ENCODE measurements at regions of chr12 and their contacts with region 1.

Region 1: GRCh38 chr12:50074936-50075807 is 10.0 kb upstream of the SMARCD1 start:
- DNase-seq: peak; percentile 85
- H3K4me3 Mint-ChIP-seq: no peak overlapping the region
- H3K27ac Mint-ChIP-seq: peak overlapping the region; percentile 30
- H3K4me1 Mint-ChIP-seq: peaks cover 12% of the 10 kb centered on the region
- H3K27me3 Mint-ChIP-seq: no peaks in the 10 kb centered on the region
- CTCF ChIP-seq: peak; percentile 90

Region 2: DNA sequence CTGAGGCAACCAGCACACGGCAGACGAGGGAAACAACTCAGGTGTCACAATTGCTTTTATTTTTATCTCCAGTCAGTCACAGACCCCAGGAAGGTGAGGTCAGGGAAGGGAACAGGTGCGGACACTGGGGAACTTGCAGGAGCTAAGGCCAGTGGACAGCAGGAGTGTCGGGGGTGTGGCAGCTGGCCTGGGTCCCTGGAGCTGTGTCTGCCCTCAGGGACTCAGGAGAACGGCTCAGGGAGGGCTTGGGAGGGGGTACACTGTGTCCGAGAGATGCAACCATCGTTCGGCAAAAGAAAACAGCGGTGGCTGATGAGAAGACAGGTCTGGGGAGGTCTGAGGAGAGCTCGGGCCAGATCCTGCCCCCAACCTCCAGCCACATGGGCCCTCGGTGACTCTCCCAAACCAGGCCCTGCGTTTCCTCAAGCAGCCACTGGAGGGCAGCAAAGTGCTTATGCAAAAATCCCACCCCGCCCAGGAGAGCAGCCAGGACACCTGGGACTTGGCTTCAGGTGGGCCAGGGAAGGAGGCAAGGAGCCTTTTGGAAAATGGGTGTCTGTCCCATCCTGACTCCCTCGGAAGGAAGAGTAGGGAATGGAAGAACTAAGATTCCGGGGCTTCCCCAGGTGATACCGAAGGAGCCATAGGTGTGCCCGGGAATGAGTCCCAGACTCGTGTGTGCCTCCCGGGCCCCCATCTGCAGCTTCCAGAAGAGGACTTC is 208.2 kb before region 1 on chr12:
- CTCF ChIA-PET with region 1: interaction called, 46 read pairs
- POLR2A ChIA-PET with region 1: no interaction called
- intact Hi-C with region 1: loop called (anchors 1 kb)
- DNase-seq: peak; percentile 77
- H3K4me3 Mint-ChIP-seq: no peak overlapping the region
- H3K27ac Mint-ChIP-seq: no peak overlapping the region
- H3K4me1 Mint-ChIP-seq: peaks cover 10% of the 10 kb centered on the region
- H3K27me3 Mint-ChIP-seq: peaks cover 14% of the 10 kb centered on the region
- CTCF ChIP-seq: peak; percentile 95

Region 3: GRCh38 chr12:49983892-49984291 is 91.3 kb before region 1 on chr12:
- CTCF ChIA-PET with region 1: interaction called, 10 read pairs
- POLR2A ChIA-PET with region 1: no interaction called
- intact Hi-C with region 1: no loop called
- DNase-seq: peak; percentile 45
- H3K4me3 Mint-ChIP-seq: no peak overlapping the region
- H3K27ac Mint-ChIP-seq: no peak overlapping the region
- H3K4me1 Mint-ChIP-seq: peaks cover 5% of the 10 kb centered on the region
- H3K27me3 Mint-ChIP-seq: no peaks in the 10 kb centered on the region
- CTCF ChIP-seq: no peak

Region 4: GRCh38 chr12:50055831-50056638 is 19.1 kb before region 1 on chr12:
- CTCF ChIA-PET with region 1: interaction called, 23 read pairs
- POLR2A ChIA-PET with region 1: interaction called, 4 read pairs
- intact Hi-C with region 1: no loop called
- DNase-seq: peak; percentile 61
- H3K4me3 Mint-ChIP-seq: peak overlapping the region; percentile 90
- H3K27ac Mint-ChIP-seq: peak overlapping the region; percentile 3
- H3K4me1 Mint-ChIP-seq: peaks cover 18% of the 10 kb centered on the region
- H3K27me3 Mint-ChIP-seq: peaks cover 35% of the 10 kb centered on the region
- CTCF ChIP-seq: peak; percentile 97

Region 5: DNA sequence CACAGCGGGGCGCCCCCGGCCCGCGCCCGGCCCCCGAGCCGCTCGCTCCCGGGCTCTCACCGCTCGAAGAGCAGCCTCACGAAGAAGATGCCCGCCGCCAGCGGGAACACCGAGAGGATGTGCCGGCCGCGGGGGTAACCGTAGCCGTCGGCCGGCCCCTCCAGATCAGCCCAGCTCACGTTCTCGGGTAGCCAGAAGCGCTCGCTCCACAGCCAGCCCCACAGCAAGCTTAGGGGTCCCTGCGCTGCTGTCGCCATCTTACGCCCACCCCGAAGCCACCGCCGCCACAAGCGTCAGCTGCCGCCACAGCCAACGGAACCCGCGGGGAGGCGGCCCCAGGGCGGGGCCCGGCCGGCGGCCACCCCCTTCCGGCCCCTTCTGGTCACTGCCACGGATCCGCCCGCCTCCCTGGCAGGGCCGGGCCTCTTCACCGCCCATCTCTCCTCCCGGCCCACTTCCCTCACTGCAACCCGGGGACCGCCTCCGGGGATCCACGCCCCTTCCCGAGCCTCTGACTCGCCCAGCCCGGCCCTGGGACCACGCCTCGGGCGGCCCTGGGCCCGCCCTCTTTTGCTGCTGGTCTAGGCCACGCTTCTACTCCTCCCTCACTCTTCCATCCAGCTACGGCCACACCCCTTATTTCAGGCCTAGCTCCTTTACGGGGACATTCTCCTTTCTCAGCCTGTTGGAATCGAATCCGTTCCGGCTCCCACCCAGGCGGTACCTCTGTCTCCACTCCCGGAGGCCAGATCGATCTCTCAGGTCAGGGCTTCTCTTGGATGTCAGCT is 92.1 kb after region 1 on chr12 and contains the start of gene CERS5:
- CTCF ChIA-PET with region 1: interaction called, 16 read pairs
- POLR2A ChIA-PET with region 1: no interaction called
- intact Hi-C with region 1: no loop called
- DNase-seq: peak; percentile 99
- H3K4me3 Mint-ChIP-seq: peak within 1 kb of the TSS; percentile 79
- H3K27ac Mint-ChIP-seq: peak within 1 kb of the TSS; percentile 79
- H3K4me1 Mint-ChIP-seq: peaks cover 12% of the 10 kb centered on the region
- H3K27me3 Mint-ChIP-seq: no peaks in the 10 kb centered on the region
- CTCF ChIP-seq: peak; percentile 9
- total RNA-seq, gene CERS5: 56.8 and 58.1 TPM in 2 replicates

Region 6: GRCh38 chr12:50314629-50315312 is 239.6 kb after region 1 on chr12:
- CTCF ChIA-PET with region 1: interaction called, 6 read pairs
- POLR2A ChIA-PET with region 1: interaction called, 3 read pairs
- intact Hi-C with region 1: loop called (anchors 5 kb)
- DNase-seq: peak; percentile 39
- H3K4me3 Mint-ChIP-seq: no peak overlapping the region
- H3K27ac Mint-ChIP-seq: no peak overlapping the region
- H3K4me1 Mint-ChIP-seq: peaks cover 5% of the 10 kb centered on the region
- H3K27me3 Mint-ChIP-seq: no peaks in the 10 kb centered on the region
- CTCF ChIP-seq: peak; percentile 58